ENCODE measurements at regions of chr12 and their contacts with region 1.

Region 1: GRCh38 chr12:53321074-53321814 is at the start of gene AAAS:
- DNase-seq: peak; percentile 84
- H3K4me3 ChIP-seq: peak within 1 kb of the TSS; percentile 98
- H3K27ac ChIP-seq: peak within 1 kb of the TSS; percentile 94
- H3K27me3 ChIP-seq: no peaks in the 10 kb centered on the region
- CTCF ChIP-seq: peak; percentile 99
- polyA plus RNA-seq, gene AAAS: 40.0 and 46.7 TPM in 2 replicates

Region 2: DNA sequence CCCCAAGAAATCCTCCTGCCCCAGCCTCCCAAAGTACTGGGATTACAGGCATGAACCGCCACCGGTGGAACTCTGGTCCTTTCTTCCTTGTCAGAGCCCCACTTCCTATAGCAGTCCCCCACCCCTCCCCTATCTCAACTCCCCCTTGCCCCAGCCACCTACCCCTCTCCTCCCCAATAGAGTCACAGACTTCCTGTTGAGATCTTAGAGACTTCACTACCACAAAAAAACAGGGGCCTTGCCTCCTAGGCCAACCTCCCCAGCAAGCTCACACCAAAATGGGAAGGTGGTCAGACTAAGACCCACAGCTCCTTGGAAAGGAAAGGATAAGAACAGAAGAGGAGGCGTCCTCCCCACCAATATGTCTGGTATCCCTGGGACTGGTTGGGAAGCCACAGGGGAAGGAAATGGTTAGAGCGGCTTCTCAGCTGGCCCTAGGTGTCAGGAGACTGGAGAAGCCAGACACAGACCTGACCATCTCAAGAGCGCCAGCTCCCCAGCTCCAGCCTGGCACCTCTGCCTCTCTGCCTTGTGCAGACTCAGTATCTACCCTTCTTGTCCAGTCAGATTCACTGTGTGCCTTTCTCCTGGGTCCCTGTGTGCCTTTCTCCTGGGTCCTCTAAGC is 122.6 kb before region 1 on chr12:
- CTCF ChIA-PET with region 1: interaction called, 13 read pairs
- POLR2A ChIA-PET with region 1: no interaction called
- DNase-seq: no peak
- H3K4me3 ChIP-seq: no peak overlapping the region
- H3K27ac ChIP-seq: no peak overlapping the region
- H3K27me3 ChIP-seq: no peaks in the 10 kb centered on the region
- CTCF ChIP-seq: no peak

Region 3: DNA sequence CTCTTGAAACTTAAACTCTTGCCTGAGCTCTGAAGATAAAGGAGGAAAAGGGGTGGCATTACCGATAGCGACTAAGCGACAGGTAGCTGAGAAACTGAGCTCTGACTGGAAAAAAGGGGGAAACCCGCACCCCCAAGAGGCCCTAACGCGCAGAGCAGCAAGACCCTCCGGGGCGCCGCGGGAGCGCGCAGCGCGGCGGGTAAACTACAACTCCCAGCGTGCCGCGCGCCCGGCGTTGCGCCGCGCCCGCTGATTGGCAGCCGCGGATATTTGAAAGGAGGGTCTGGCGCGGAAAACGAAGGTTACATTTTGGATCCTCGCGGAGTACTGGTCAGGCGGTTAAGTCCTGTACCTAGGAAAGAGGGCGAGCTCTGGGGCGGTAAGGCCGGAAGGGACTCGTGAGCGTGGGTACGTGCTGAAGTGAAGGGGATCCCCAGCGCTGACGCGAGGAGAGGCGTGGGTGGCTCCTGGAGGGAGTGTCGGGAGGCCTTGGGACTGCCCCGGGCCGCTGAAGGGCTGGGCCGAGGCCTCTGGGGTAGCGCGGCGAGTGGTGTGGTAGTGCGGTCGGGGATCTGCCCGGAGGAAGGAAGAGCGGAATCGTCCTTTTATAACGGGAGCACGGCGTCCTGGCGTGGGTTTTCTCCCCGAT is 53.1 kb before region 1 on chr12 and contains the start of gene ESPL1:
- CTCF ChIA-PET with region 1: interaction called, 16 read pairs
- POLR2A ChIA-PET with region 1: interaction called, 3 read pairs
- DNase-seq: no peak
- H3K4me3 ChIP-seq: peak within 1 kb of the TSS; percentile 95
- H3K27ac ChIP-seq: peak within 1 kb of the TSS; percentile 61
- H3K27me3 ChIP-seq: no peaks in the 10 kb centered on the region
- CTCF ChIP-seq: peak; percentile 24; the same call in 1 of the 2 replicates
- polyA plus RNA-seq, gene ESPL1: 1.6 and 2.1 TPM in 2 replicates

Region 4: GRCh38 chr12:53308276-53308675 is 13.0 kb before region 1 on chr12:
- CTCF ChIA-PET with region 1: interaction called, 34 read pairs
- POLR2A ChIA-PET with region 1: interaction called, 3 read pairs
- DNase-seq: no peak
- H3K4me3 ChIP-seq: no peak overlapping the region
- H3K27ac ChIP-seq: no peak overlapping the region
- H3K27me3 ChIP-seq: no peaks in the 10 kb centered on the region
- CTCF ChIP-seq: no peak

Region 5: GRCh38 chr12:53352331-53353256 is 31.4 kb after region 1 on chr12:
- CTCF ChIA-PET with region 1: interaction called, 24 read pairs
- POLR2A ChIA-PET with region 1: interaction called, 3 read pairs
- DNase-seq: peak; percentile 68
- H3K4me3 ChIP-seq: no peak overlapping the region
- H3K27ac ChIP-seq: no peak overlapping the region
- H3K27me3 ChIP-seq: no peaks in the 10 kb centered on the region
- CTCF ChIP-seq: peak; percentile 88

Region 6: GRCh38 chr12:53508534-53509199 is 187.4 kb after region 1 on chr12:
- CTCF ChIA-PET with region 1: interaction called, 16 read pairs
- POLR2A ChIA-PET with region 1: interaction called, 5 read pairs
- DNase-seq: peak; percentile 46
- H3K4me3 ChIP-seq: no peak overlapping the region
- H3K27ac ChIP-seq: no peak overlapping the region
- H3K27me3 ChIP-seq: no peaks in the 10 kb centered on the region
- CTCF ChIP-seq: peak; percentile 93

Measured in AG04450 (cell line).